ENCODE measurements at regions of chrX and their contacts with region 1.

Region 1: GRCh38 chrX:136147315-136147901 is at the start of gene FHL1:
- DNase-seq: no peak
- H3K4me3 ChIP-seq: peak within 1 kb of the TSS; percentile 31 to 55 (median 55)
- H3K27ac ChIP-seq: no peak within 1 kb of the TSS
- H3K4me1 ChIP-seq: no peaks in the 10 kb centered on the region
- H3K27me3 ChIP-seq: peaks cover 2% of the 10 kb centered on the region
- CTCF ChIP-seq: no peak
- total RNA-seq, gene FHL1: 1.3 to 82.8 TPM

Region 2: DNA sequence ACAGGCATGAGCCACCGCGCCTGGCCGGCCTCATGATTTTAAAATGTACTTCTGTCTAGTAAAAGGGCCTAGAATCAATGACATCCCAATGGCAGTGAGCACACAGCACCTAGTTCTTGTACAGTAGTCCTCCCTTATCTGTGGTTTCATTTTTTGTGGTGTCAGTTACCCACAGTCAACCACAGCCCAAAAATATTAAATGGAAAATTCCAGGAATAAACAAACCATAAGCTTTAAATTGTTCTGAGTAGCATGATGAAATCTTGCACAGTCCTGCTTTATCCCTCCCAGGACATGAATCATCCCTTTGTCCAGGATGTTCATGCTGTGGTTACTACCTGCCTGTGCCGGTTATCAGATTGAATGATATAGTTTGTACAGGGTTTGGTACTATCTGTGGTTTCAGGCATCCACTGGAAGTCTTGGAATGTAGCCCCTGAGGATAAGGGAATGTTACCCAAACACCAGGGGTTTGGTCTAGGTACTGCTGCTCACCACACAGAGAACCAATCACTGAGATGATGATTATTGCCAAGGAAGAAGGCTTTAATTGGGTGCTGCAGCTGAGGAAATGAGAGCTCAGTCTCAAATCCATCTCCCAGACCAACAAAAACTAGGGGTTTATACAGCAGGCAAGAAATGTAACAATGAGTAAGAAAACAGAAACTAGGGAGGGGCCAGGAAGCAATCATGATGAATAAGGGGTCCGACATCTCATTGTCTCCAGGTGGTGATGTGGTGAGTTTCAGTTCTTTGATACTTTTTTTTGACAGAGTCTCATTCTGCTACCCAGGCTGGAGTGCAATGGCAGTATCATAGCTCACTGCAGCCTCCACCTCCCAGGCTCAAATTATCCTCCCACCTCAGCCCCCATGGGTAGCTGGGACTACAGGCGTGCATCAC is 16.2 kb before region 1 on chrX:
- CTCF ChIA-PET with region 1: no interaction called
- dilution Hi-C with region 1: no loop called
- in situ Hi-C with region 1: no loop called
- intact Hi-C with region 1: loop called (anchors 2 kb)
- DNase-seq: peak; percentile 91
- H3K4me3 ChIP-seq: no peak overlapping the region
- H3K27ac ChIP-seq: peak overlapping the region; percentile 35
- H3K4me1 ChIP-seq: no peaks in the 10 kb centered on the region
- H3K27me3 ChIP-seq: peaks cover 2% of the 10 kb centered on the region
- CTCF ChIP-seq: no peak

Region 3: GRCh38 chrX:136227948-136228838 is 80.8 kb after region 1 on chrX:
- CTCF ChIA-PET with region 1: no interaction called
- dilution Hi-C with region 1: no loop called
- in situ Hi-C with region 1: no loop called
- intact Hi-C with region 1: no loop called
- DNase-seq: no peak
- H3K4me3 ChIP-seq: no peak overlapping the region
- H3K27ac ChIP-seq: no peak overlapping the region
- H3K4me1 ChIP-seq: no peaks in the 10 kb centered on the region
- H3K27me3 ChIP-seq: no peaks in the 10 kb centered on the region
- CTCF ChIP-seq: no peak